Mammary epithelial cell (primary cell): ENCODE measurements at regions of chr1 and their contacts with region 1.

Region 1: GRCh38 chr1:241181471-241181870 is 175.5 kb downstream of the RGS7 start:
- DNase-seq: no peak
- H3K4me3 ChIP-seq: no peak overlapping the region
- H3K27ac ChIP-seq: no peak overlapping the region
- H3K4me1 ChIP-seq: no peaks in the 10 kb centered on the region
- H3K27me3 ChIP-seq: no peaks in the 10 kb centered on the region
- CTCF ChIP-seq: no peak

Region 2: DNA sequence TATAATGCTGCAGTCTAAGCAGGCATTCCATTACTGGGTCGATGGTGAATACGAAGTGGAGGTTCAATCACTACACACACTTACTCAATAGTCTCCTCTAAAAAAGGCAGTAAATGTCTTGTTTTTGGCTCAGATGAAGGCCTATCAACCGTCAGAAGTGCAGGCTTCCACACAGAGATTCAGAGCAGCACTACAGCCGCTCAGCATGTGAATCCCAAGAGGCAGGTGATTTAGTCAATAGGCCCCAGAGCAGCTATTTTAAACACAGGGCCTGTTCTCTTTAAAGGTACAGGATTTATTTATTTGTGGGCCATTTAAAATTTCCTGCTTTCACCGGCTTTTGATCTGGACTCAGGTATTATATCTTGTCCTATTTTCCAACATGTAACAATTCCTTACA is 118.2 kb before region 1 on chr1:
- CTCF ChIA-PET with region 1: no interaction called
- dilution Hi-C with region 1: no loop called
- in situ Hi-C with region 1: no loop called
- intact Hi-C with region 1: no loop called
- DNase-seq: no peak
- H3K4me3 ChIP-seq: no peak overlapping the region
- H3K27ac ChIP-seq: no peak overlapping the region
- H3K4me1 ChIP-seq: no peaks in the 10 kb centered on the region
- H3K27me3 ChIP-seq: no peaks in the 10 kb centered on the region
- CTCF ChIP-seq: no peak

Region 3: GRCh38 chr1:241115784-241116183 is 65.7 kb before region 1 on chr1:
- CTCF ChIA-PET with region 1: no interaction called
- dilution Hi-C with region 1: loop called (anchors 5 kb)
- in situ Hi-C with region 1: no loop called
- intact Hi-C with region 1: no loop called
- DNase-seq: no peak
- H3K4me3 ChIP-seq: no peak overlapping the region
- H3K27ac ChIP-seq: no peak overlapping the region
- H3K4me1 ChIP-seq: no peaks in the 10 kb centered on the region
- H3K27me3 ChIP-seq: no peaks in the 10 kb centered on the region
- CTCF ChIP-seq: no peak